Psoas muscle (tissue), 8 donors: ENCODE measurements at regions of chr15 and their contacts with region 1.

Region 1: DNA sequence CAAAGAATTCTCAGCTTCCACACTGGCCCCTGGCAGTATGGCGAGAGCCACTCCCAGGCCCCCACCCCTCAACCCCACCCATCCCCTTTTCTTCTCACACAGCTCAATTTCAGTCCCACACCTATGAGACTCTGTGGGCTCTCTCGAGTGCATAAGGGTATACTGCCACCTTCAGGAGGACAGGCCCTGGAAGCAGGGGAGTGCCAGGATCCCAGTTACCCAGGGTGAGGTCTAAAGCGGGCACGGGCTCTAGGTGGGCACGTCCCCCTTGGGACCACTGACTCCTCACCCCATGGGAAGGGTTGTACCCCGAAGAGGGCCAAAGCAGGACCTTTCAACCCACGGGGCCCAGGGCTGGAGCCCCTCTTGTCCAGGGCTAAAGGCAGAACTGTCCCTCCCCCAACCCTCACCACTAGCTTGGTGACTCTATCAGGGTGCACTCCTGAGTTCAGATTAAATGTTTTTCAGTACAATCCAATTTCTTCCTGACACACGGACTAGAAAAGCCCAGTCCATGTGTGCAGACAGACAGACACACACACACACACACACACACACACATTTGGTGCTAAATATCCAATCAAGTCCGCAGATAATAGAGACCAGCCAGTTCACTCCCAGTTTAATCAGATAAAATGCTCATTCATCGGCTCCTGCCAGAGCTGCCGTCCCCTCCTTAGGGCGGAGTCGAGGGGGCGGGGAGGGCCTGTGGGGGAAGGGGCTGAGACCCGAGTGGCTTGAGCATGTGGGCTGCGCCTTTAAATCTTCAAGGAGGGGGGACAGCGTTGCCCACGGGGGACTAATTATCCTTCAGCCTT is 59.4 kb downstream of the CYP11A1 start:
- DNase-seq: no peak
- ATAC-seq: peak; percentile 85 to 90 (median 86)
- H3K4me3 ChIP-seq: no peak overlapping the region
- H3K27ac ChIP-seq: no peak overlapping the region
- H3K4me1 ChIP-seq: no peaks in the 10 kb centered on the region
- H3K27me3 ChIP-seq: peaks cover 0 to 39% (median 7%) of the 10 kb centered on the region in 3 donors
- CTCF ChIP-seq: peak; percentile 59

Region 2: DNA sequence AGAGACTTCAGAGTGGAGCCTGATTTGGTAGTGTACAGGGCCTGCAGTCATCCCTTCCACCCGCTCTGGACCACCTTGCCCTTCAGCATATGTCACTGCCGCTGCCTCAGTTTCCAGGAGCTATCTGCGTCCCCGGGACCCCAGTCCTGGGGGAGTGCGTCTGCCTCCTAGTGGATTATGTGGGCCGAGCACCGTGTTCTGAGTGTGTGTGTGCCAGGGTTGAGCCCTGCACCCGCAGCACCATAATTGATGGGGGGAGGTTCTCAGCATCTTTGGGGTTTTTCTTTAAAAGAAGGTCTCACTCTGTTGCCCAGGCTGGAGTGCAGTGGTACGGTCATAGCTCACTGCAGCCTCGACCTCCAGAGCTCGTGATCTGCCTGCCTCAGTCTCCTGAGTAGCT is 590.2 kb before region 1 on chr15:
- intact Hi-C with region 1: no loop called
- DNase-seq: no peak
- ATAC-seq: no peak
- H3K4me3 ChIP-seq: no peak overlapping the region
- H3K27ac ChIP-seq: no peak overlapping the region
- H3K4me1 ChIP-seq: peaks cover 19% of the 10 kb centered on the region
- H3K27me3 ChIP-seq: no peaks in the 10 kb centered on the region
- CTCF ChIP-seq: no peak

Region 3: GRCh38 chr15:73964736-73965093 is 343.3 kb before region 1 on chr15:
- intact Hi-C with region 1: loop called in 1 of 2 experiments (anchors 5 kb)
- DNase-seq: peak; percentile 84 to 87
- ATAC-seq: peak; percentile 84 to 96 (median 94)
- H3K4me3 ChIP-seq: no peak overlapping the region
- H3K27ac ChIP-seq: no peak overlapping the region
- H3K4me1 ChIP-seq: no peaks in the 10 kb centered on the region
- H3K27me3 ChIP-seq: no peaks in the 10 kb centered on the region
- CTCF ChIP-seq: peak; percentile 90

Region 4: DNA sequence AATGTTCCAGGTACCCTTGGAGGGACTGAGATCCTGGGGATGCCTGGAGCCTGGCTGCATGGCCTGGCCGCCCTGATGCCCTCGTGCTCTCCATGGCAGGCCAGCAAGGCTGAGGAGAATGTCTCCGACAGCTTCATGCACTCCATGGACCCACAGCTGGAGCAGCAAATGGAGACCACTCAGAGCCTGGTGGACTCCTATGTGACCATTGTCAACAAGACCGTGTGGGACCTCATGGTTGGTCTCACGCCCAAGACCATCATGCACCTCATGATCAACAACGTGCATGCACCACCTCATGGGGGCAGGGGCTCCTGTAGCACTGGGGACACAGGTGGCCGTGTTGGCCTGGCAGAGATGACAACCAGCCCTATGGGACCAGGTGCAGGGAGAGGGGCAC is 245.4 kb before region 1 on chr15:
- intact Hi-C with region 1: loop called in 1 of 2 experiments (anchors 5 kb)
- DNase-seq: no peak
- ATAC-seq: no peak
- H3K4me3 ChIP-seq: no peak overlapping the region
- H3K27ac ChIP-seq: no peak overlapping the region
- H3K4me1 ChIP-seq: no peaks in the 10 kb centered on the region
- H3K27me3 ChIP-seq: no peaks in the 10 kb centered on the region
- CTCF ChIP-seq: no peak

Region 5: DNA sequence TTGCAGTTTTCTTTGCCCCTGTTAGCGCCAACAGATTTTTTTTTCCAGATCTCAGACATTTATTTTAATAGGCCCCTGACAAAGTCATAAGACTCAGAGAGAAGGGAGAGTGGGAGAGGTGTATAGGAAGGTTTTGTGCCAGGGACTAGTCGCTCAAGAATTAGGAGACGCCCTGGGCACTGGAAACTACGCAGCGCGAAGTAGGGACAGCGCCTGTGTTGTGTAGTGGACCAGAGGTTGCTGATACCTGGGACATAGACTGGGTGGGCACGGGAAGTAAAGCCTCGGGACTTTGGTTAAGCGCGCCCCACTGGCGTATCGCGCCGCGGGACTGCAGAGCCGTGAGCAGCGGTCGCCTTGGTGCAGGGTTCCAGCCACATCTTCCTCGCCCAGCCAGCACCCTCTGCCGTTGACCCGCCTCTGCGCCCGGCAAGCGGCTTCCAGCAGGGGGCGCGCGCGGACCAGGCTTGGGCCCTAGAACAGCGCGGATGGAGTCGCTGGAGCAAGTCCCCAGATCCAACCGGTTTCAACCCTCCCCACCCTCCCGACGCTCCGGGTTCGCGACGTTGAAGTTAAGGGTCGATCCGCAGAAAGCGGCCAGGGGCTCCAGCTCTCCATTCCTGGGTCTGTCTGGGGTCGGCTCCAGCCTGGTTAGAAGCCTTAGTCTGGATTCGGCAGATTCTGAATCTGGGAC is 180.6 kb before region 1 on chr15:
- intact Hi-C with region 1: loop called (anchors 1 to 2 kb)
- DNase-seq: peak; percentile 91 to 92
- ATAC-seq: peak; percentile 93 to 96 (median 96)
- H3K4me3 ChIP-seq: peak overlapping the region; percentile 56
- H3K27ac ChIP-seq: no peak overlapping the region
- H3K4me1 ChIP-seq: peaks cover 4% of the 10 kb centered on the region
- H3K27me3 ChIP-seq: peaks cover 0 to 72% (median 37%) of the 10 kb centered on the region in 3 donors
- CTCF ChIP-seq: peak; percentile 99

Region 6: GRCh38 chr15:74275957-74276356 is 32.1 kb before region 1 on chr15:
- intact Hi-C with region 1: no loop called
- DNase-seq: no peak
- ATAC-seq: no peak
- H3K4me3 ChIP-seq: no peak overlapping the region
- H3K27ac ChIP-seq: no peak overlapping the region
- H3K4me1 ChIP-seq: no peaks in the 10 kb centered on the region
- H3K27me3 ChIP-seq: peaks cover 0 to 24% (median 3%) of the 10 kb centered on the region in 3 donors
- CTCF ChIP-seq: no peak

Region 7: DNA sequence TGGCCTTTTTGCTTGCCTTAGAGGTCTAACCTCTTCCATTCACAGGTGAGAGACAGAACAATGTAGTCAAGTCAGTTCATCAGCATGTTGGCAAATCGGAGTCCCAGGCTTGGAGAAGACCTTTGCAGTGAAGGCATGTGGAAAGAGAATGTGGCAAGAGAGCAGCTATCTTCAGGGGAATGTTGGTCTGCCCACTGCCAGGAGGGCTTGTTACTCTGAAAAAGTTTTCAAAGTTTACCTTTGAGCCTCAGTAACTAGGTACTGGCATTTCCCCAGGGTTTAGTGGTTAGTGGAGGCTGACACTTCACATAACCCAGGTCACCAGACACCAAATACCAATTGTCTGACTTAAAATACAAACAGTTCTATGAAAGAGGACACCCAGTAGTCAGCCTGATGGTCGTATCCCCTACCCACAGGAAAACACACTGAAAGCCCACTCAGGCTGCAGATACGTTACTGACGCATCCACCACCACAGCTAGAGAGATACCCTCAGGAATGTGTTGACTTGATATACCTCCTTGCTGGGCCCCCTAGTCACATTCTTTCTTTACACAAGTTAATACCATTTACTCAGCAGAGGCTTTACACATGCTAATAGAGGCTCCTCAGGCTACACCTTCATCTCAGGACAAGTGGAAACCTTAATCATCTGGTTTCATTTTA is 223.2 kb after region 1 on chr15:
- intact Hi-C with region 1: no loop called
- DNase-seq: no peak
- ATAC-seq: no peak
- H3K4me3 ChIP-seq: no peak overlapping the region
- H3K27ac ChIP-seq: no peak overlapping the region
- H3K4me1 ChIP-seq: no peaks in the 10 kb centered on the region
- H3K27me3 ChIP-seq: no peaks in the 10 kb centered on the region
- CTCF ChIP-seq: no peak